Gastrocnemius medialis (tissue), 4 donors: ENCODE measurements at regions of chr11 and their contacts with region 1.

Region 1: DNA sequence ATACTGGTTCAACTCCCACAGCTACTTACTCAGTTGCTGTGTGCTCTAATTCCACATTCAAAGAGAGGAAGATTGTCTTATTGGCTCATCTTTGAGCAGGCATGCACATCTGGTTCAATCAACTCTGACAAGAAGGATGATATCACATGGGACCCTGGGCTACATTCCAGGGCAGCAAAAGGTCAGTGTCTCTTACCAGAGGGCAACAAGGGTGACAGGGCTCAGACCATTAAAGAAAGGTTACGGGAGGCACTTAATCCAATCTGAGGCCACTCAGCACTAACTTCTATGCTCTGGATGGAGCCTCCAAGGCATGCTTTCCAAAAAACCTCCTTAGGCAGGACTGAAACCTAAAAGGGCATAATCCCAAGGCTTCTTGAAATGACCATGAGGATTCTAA is 549.4 kb upstream of the API5 start:
- DNase-seq: no peak
- ATAC-seq: no peak
- H3K4me3 ChIP-seq: no peak overlapping the region
- H3K27ac ChIP-seq: no peak overlapping the region
- H3K4me1 ChIP-seq: no peaks in the 10 kb centered on the region
- H3K27me3 ChIP-seq: no peaks in the 10 kb centered on the region
- CTCF ChIP-seq: no peak
- POLR2A ChIP-seq: no peak

Region 2: DNA sequence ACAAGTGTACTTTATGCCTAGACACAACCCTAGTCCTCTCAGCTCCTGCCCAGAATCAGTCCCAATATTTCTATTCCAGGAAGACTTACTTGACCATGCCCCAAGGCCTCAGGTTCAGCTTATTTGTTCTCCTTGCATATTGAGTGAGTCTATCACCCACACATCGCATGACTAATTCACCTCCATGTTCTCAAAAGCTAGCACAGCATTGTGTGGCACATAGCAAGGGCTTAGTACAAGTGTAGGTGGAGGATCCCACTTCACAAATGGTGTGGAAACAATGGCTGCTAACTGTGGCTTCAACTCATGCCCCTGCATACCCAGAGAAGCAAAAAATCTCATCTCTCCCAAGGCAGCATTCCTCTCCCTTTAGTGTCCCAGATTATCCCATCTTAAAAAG is 53.1 kb before region 1 on chr11:
- in situ Hi-C with region 1: loop called in 1 of 4 experiments (anchors 10 kb)
- intact Hi-C with region 1: no loop called
- DNase-seq: no peak
- ATAC-seq: no peak
- H3K4me3 ChIP-seq: no peak overlapping the region
- H3K27ac ChIP-seq: no peak overlapping the region
- H3K4me1 ChIP-seq: no peaks in the 10 kb centered on the region
- H3K27me3 ChIP-seq: no peaks in the 10 kb centered on the region
- CTCF ChIP-seq: no peak
- POLR2A ChIP-seq: no peak